Vagina (tissue), 2 donors: ENCODE measurements at regions of chr15 and their contacts with region 1.

Region 1: GRCh38 chr15:41660235-41661077 is at the start of gene MGA:
- DNase-seq: peak in 1 of 2 donors; percentile 94
- H3K4me3 ChIP-seq: peak within 1 kb of the TSS; percentile 57 to 60
- H3K27ac ChIP-seq: peak within 1 kb of the TSS; percentile 74
- H3K4me1 ChIP-seq: peaks cover 24% of the 10 kb centered on the region
- H3K27me3 ChIP-seq: no peaks in the 10 kb centered on the region
- CTCF ChIP-seq: no peak
- POLR2A ChIP-seq: peak in 1 of 2 donors; percentile 45
- total RNA-seq, gene MGA: 44.2 TPM

Region 2: GRCh38 chr15:41621200-41622193 is 39.0 kb before region 1 on chr15:
- intact Hi-C with region 1: loop called (anchors 5 kb)
- DNase-seq: peak in 1 of 2 donors; percentile 90
- H3K4me3 ChIP-seq: peak overlapping the region; percentile 59 to 67
- H3K27ac ChIP-seq: peak overlapping the region; percentile 82
- H3K4me1 ChIP-seq: peaks cover 17% of the 10 kb centered on the region
- H3K27me3 ChIP-seq: no peaks in the 10 kb centered on the region
- CTCF ChIP-seq: no peak
- POLR2A ChIP-seq: no peak

Region 3: DNA sequence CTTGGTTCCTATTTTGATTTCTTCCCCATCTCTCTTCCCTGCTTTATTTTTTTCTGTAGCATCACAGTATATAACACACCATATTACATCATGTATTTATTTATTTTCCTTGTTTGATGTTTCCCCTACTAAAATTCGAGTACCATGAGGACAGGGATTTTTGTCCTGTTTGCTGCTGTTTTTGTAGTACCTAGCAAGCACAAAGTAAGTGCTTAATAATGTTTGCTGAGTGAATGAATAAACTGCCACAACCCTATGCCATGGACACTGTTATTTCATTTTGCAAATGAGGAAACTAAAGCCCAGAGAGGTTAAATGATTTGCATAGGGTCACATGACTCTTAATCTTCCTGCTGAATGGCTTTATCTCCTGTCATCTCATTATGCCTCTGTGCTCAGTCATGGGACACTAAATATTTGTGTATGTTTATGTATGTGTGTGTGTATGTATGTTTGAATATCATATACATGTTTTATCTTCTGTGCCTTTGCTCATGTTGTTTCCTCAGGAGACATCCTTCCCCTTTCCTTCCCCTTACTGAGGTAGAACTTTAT is 26.3 kb before region 1 on chr15:
- intact Hi-C with region 1: no loop called
- DNase-seq: no peak
- H3K4me3 ChIP-seq: no peak overlapping the region
- H3K27ac ChIP-seq: no peak overlapping the region
- H3K4me1 ChIP-seq: peaks cover 4% of the 10 kb centered on the region
- H3K27me3 ChIP-seq: no peaks in the 10 kb centered on the region
- CTCF ChIP-seq: no peak
- POLR2A ChIP-seq: no peak